HCT116 (cell line): ENCODE measurements at regions of chr3 and their contacts with region 1.

Region 1: GRCh38 chr3:128617557-128618397 is 32.8 kb downstream of the RPN1 start:
- DNase-seq: peak; percentile 71
- ATAC-seq: peak; percentile 93
- H3K4me3 ChIP-seq: peak overlapping the region; percentile 35 to 44
- H3K27ac ChIP-seq: peak overlapping the region; percentile 37; the same call in 1 of the 2 replicates
- H3K4me1 ChIP-seq: peaks cover 0 to 24% of the 10 kb centered on the region in 2 experiments; a peak in 2 of 4 replicates
- H3K27me3 ChIP-seq: no peaks in the 10 kb centered on the region
- CTCF ChIP-seq: peak; percentile 76 to 96 (median 89)
- POLR2A ChIP-seq: no peak
- RAD21 ChIP-seq: peak; percentile 68

Region 2: DNA sequence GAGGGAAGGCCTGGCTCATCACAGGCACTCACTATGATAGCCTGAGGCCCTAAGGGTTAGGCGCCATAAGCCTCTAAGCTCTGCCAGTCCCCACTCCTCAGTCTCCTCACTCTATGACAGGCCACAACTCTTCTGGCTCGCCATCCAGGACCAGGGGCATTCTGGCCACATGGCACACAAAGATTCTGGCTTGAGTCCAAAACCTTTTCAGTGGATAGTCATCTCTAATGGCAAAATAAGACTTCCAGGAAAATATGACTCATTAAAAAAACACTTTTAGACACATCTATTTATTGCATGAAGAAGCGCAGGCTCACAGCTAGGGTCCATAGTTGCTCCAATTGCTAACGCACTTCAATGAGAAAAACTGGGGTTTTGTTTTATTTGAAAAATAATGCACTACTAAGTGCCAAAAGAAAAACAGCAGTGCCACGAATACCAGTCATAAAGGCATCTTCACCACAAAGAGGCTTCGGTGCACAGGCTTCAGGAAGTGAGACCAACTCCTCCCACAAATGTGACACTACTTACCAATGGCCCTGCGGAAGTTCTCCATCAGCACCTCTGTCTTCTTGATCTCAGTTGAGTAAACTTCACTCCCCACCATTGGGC is 505.3 kb before region 1 on chr3:
- CTCF ChIA-PET with region 1: no interaction called
- POLR2A ChIA-PET with region 1: no interaction called
- RAD21 ChIA-PET with region 1: no interaction called
- intact Hi-C with region 1: no loop called
- DNase-seq: peak; percentile 43
- ATAC-seq: peak; percentile 67
- H3K4me3 ChIP-seq: no peak overlapping the region
- H3K27ac ChIP-seq: peak overlapping the region; percentile 54
- H3K4me1 ChIP-seq: peaks cover 13 to 17% of the 10 kb centered on the region in 2 experiments
- H3K27me3 ChIP-seq: no peaks in the 10 kb centered on the region
- CTCF ChIP-seq: no peak
- POLR2A ChIP-seq: no peak
- RAD21 ChIP-seq: no peak

Region 3: GRCh38 chr3:128383316-128384235 is 234.2 kb before region 1 on chr3:
- CTCF ChIA-PET with region 1: no interaction called
- POLR2A ChIA-PET with region 1: no interaction called
- RAD21 ChIA-PET with region 1: no interaction called
- intact Hi-C with region 1: no loop called
- DNase-seq: peak; percentile 38
- ATAC-seq: peak; percentile 90
- H3K4me3 ChIP-seq: peak overlapping the region in 1 of 2 experiments; percentile 5; a peak in 1 of 4 replicates
- H3K27ac ChIP-seq: peak overlapping the region; percentile 41
- H3K4me1 ChIP-seq: peaks cover 23% of the 10 kb centered on the region in 2 experiments
- H3K27me3 ChIP-seq: no peaks in the 10 kb centered on the region
- CTCF ChIP-seq: no peak
- POLR2A ChIP-seq: no peak
- RAD21 ChIP-seq: no peak

Region 4: GRCh38 chr3:128794770-128795649 is 177.2 kb after region 1 on chr3:
- CTCF ChIA-PET with region 1: no interaction called
- POLR2A ChIA-PET with region 1: no interaction called
- RAD21 ChIA-PET with region 1: no interaction called
- intact Hi-C with region 1: loop called (anchors 2 kb)
- DNase-seq: peak; percentile 46
- ATAC-seq: peak; percentile 96
- H3K4me3 ChIP-seq: no peak overlapping the region
- H3K27ac ChIP-seq: no peak overlapping the region; the same call in 1 of the 2 replicates
- H3K4me1 ChIP-seq: peaks cover 12 to 46% of the 10 kb centered on the region in 2 experiments; a peak in 3 of 4 replicates
- H3K27me3 ChIP-seq: no peaks in the 10 kb centered on the region
- CTCF ChIP-seq: peak; percentile 80 to 82 (median 82)
- POLR2A ChIP-seq: no peak
- RAD21 ChIP-seq: peak; percentile 82

Region 5: GRCh38 chr3:129233538-129233937 is 615.8 kb after region 1 on chr3:
- CTCF ChIA-PET with region 1: no interaction called
- POLR2A ChIA-PET with region 1: no interaction called
- RAD21 ChIA-PET with region 1: no interaction called
- intact Hi-C with region 1: no loop called
- DNase-seq: no peak
- ATAC-seq: no peak
- H3K4me3 ChIP-seq: no peak overlapping the region
- H3K27ac ChIP-seq: no peak overlapping the region
- H3K4me1 ChIP-seq: peaks cover 17 to 41% of the 10 kb centered on the region in 2 experiments
- H3K27me3 ChIP-seq: no peaks in the 10 kb centered on the region
- CTCF ChIP-seq: no peak
- POLR2A ChIP-seq: no peak
- RAD21 ChIP-seq: no peak